ENCODE measurements at regions of chr1 and their contacts with region 1.

Region 1: GRCh38 chr1:116817582-116818064 is 63.4 kb downstream of the CD2 start:
- DNase-seq: peak; percentile 75
- ATAC-seq: peak; percentile 100
- H3K4me3 ChIP-seq: no peak overlapping the region
- H3K27ac ChIP-seq: no peak overlapping the region
- H3K4me1 ChIP-seq: no peaks in the 10 kb centered on the region
- H3K27me3 ChIP-seq: no peaks in the 10 kb centered on the region
- CTCF ChIP-seq: peak; percentile 77 to 98 (median 85)
- POLR2A ChIP-seq: no peak
- RAD21 ChIP-seq: peak; percentile 80

Region 2: GRCh38 chr1:116448813-116449281 is 368.8 kb before region 1 on chr1:
- CTCF ChIA-PET with region 1: no interaction called
- POLR2A ChIA-PET with region 1: no interaction called
- RAD21 ChIA-PET with region 1: no interaction called
- intact Hi-C with region 1: no loop called
- DNase-seq: no peak
- ATAC-seq: no peak
- H3K4me3 ChIP-seq: no peak overlapping the region
- H3K27ac ChIP-seq: no peak overlapping the region
- H3K4me1 ChIP-seq: no peaks in the 10 kb centered on the region
- H3K27me3 ChIP-seq: no peaks in the 10 kb centered on the region
- CTCF ChIP-seq: no peak
- POLR2A ChIP-seq: no peak
- RAD21 ChIP-seq: no peak

Region 3: DNA sequence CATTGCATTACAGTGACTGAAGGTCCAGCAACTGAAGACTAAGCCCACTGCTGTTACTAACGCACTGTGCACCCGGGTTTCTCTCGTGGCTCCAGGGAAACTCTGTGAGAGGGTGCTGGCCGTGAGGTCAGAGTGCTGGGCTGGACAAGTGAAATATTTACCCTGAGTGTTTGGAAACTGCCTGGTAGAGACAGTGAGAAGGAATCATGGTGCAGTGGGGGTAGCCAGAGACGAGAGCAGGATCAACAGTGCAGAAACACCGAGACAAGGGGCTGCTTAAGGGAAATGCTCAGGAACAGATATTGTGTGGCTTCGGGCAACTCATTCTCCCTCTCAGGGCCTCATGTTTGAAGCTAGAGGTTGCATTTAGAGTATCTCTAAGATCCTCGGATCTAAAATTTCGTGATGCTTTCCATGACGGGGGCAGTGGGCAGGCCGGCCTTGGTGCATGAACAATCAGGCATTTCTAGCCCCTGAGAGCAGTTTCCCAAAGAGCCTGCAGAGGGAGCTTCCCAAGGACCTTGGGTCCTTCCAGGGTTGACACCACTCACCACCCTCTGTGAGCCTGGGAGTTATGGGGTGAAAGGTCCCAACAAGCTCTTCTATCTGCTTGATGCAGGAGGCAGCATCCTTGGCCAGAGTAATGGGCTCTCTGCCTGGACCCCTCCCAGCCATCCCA is 53.7 kb before region 1 on chr1:
- CTCF ChIA-PET with region 1: interaction called, 3 read pairs
- POLR2A ChIA-PET with region 1: no interaction called
- RAD21 ChIA-PET with region 1: no interaction called
- intact Hi-C with region 1: loop called (anchors 10 kb)
- DNase-seq: peak; percentile 15
- ATAC-seq: peak; percentile 94
- H3K4me3 ChIP-seq: no peak overlapping the region
- H3K27ac ChIP-seq: no peak overlapping the region
- H3K4me1 ChIP-seq: no peaks in the 10 kb centered on the region
- H3K27me3 ChIP-seq: no peaks in the 10 kb centered on the region
- CTCF ChIP-seq: peak; percentile 39 to 75 (median 59); a peak in 4 of 6 replicates
- POLR2A ChIP-seq: no peak
- RAD21 ChIP-seq: peak; percentile 37

Region 4: DNA sequence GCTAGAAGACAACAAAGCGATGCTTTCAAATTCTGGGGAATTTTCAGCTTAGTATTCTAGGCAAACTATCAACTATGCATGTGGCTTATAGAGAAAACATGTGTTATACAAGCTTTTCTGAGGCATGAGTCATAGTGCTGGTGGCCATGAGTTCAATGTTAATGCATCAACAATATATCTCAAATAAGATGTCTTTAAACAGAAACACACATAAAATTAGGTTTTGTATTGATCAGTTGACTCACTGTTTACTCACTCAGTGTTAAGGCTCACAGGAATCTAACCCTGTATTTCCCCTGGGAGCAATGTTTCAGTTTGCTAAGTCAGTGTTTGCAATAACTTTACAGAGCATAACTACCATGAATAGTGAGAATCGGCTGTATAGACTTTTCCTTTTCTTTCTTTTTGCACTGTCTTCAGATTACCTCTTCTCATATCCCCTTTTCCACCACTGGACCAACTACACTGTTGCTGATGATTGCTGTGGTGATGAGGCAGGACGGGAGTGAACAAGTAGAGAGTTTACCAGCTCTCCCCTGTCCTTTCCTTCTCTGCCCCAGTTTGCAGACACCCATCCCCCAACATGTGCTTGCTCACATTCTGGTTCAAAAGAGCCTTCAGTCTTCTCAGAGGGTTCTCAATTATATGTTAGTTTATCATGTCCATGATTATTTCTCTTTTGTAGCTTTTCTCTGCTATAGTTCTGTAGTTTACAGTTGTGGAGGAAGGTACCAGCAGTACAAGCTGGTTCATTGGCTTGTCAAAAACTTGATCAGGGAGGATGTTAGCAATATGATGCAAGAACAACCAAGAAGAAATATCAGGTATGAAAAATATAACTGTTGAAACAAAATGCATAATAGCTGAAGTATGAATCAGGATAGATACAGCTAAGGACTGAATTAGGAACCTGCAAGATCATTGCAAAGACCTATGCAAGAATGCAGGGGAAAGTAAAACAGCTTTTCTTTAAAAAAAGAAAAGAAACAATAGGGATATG is 39.5 kb before region 1 on chr1:
- CTCF ChIA-PET with region 1: no interaction called
- POLR2A ChIA-PET with region 1: no interaction called
- RAD21 ChIA-PET with region 1: no interaction called
- intact Hi-C with region 1: no loop called
- DNase-seq: no peak
- ATAC-seq: no peak
- H3K4me3 ChIP-seq: no peak overlapping the region
- H3K27ac ChIP-seq: no peak overlapping the region
- H3K4me1 ChIP-seq: no peaks in the 10 kb centered on the region
- H3K27me3 ChIP-seq: peaks cover 12% of the 10 kb centered on the region; the same call in 1 of the 2 replicates
- CTCF ChIP-seq: no peak
- POLR2A ChIP-seq: no peak
- RAD21 ChIP-seq: no peak